HEK293 (cell line): ENCODE measurements at regions of chr6 and their contacts with region 1.

Region 1: GRCh38 chr6:21593412-21593926 is at the start of gene SOX4:
- H3K4me3 ChIP-seq: peak within 1 kb of the TSS; percentile 55
- H3K27ac ChIP-seq: peak within 1 kb of the TSS; percentile 99
- H3K4me1 ChIP-seq: peaks cover 12% of the 10 kb centered on the region
- CTCF ChIP-seq: no peak

Region 2: DNA sequence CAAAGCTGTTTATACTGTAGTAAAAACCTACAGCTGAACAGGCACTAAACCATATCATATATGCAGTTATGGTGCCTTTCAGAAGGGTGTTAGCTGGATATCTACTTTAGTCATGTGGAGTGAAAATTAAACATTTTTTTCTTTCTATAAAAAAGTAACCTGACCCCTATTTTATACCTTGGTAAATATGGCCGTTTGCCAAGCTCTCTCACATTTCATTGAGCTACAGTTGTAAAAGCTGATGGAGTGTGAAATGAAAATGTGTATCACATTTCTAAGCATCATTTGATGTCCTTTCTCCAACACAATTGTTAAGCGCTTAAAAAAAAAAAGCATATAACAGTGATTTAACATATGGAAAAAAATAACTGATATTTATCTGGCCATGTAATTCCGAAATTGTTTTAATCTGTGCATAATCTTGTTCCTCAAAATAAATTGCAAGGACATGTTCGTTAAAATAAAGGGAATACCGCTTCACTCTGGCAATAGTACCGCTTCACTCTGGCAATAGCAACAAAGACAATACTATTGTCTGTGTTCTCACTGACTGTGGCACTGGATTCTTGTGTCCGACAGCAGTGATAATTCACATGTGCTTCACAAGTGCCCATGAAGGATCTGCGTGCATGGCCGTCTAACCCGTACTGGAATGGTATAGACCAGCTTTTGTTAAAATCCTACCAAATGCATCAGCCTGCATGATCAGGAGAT is 391.7 kb before region 1 on chr6:
- CTCF ChIA-PET with region 1: no interaction called
- POLR2A ChIA-PET with region 1: interaction called, 12 read pairs
- H3K4me3 ChIP-seq: no peak overlapping the region
- H3K27ac ChIP-seq: peak overlapping the region; percentile 82
- H3K4me1 ChIP-seq: peaks cover 37% of the 10 kb centered on the region
- CTCF ChIP-seq: no peak

Region 3: DNA sequence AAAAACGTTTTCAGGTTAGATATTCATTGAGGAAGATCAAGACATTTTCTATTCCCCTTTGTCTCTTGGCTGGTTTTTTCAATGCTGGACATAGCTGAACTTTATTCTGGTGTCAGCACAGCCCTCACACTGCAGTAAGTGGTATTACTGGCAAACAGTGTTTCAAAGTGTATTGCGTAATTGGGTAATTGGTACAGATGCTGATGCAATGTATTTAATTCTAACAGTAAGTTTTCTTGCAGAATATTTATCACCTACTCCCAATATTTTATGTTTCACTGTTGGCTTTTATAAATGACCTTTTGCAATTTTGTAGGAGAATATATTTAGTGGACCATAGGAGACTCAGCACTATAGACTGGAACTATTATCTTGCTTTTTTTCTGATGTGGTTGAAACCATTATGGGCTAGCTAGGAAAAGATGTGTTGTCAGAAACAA is 287.6 kb before region 1 on chr6:
- CTCF ChIA-PET with region 1: no interaction called
- POLR2A ChIA-PET with region 1: no interaction called
- H3K4me3 ChIP-seq: no peak overlapping the region
- H3K27ac ChIP-seq: no peak overlapping the region
- H3K4me1 ChIP-seq: no peaks in the 10 kb centered on the region
- CTCF ChIP-seq: no peak

Region 4: GRCh38 chr6:21653905-21654304 is 60.4 kb after region 1 on chr6:
- CTCF ChIA-PET with region 1: interaction called, 3 read pairs
- POLR2A ChIA-PET with region 1: interaction called, 10 read pairs
- H3K4me3 ChIP-seq: no peak overlapping the region
- H3K27ac ChIP-seq: no peak overlapping the region
- H3K4me1 ChIP-seq: no peaks in the 10 kb centered on the region
- CTCF ChIP-seq: no peak

Region 5: GRCh38 chr6:21759721-21760120 is 166.3 kb after region 1 on chr6:
- CTCF ChIA-PET with region 1: no interaction called
- POLR2A ChIA-PET with region 1: interaction called, 18 read pairs
- H3K4me3 ChIP-seq: no peak overlapping the region
- H3K27ac ChIP-seq: no peak overlapping the region
- H3K4me1 ChIP-seq: peaks cover 4% of the 10 kb centered on the region; the same call in 1 of the 2 replicates
- CTCF ChIP-seq: no peak

Region 6: DNA sequence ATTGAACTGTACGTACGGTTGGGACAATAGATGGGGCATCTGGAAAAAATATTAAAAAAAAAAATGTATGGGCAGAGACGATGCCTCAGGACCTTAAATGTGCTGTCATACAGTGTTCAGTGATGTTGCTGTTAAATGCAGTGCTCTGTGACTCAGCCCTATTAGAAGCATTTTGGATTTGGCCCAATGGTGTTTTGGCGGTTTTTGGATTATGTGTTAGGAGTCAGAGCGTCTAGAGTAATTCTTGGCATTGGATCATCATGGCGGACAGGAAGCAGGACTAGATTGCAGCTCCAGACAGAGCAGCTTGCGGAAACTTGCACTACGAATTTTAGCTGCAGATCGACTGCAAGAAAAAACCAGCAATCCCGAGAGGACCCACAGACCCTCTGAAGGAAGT is 280.1 kb after region 1 on chr6:
- CTCF ChIA-PET with region 1: no interaction called
- POLR2A ChIA-PET with region 1: no interaction called
- H3K4me3 ChIP-seq: no peak overlapping the region
- H3K27ac ChIP-seq: no peak overlapping the region
- H3K4me1 ChIP-seq: no peaks in the 10 kb centered on the region
- CTCF ChIP-seq: no peak

Region 7: GRCh38 chr6:21914121-21914973 is 320.9 kb after region 1 on chr6:
- CTCF ChIA-PET with region 1: no interaction called
- POLR2A ChIA-PET with region 1: interaction called, 28 read pairs
- H3K4me3 ChIP-seq: no peak overlapping the region
- H3K27ac ChIP-seq: peak overlapping the region; percentile 58
- H3K4me1 ChIP-seq: peaks cover 7% of the 10 kb centered on the region; the same call in 1 of the 2 replicates
- CTCF ChIP-seq: no peak

Region 8: GRCh38 chr6:22008248-22008836 is 414.9 kb after region 1 on chr6:
- CTCF ChIA-PET with region 1: no interaction called
- POLR2A ChIA-PET with region 1: interaction called, 17 read pairs
- H3K4me3 ChIP-seq: no peak overlapping the region
- H3K27ac ChIP-seq: no peak overlapping the region
- H3K4me1 ChIP-seq: peaks cover 13% of the 10 kb centered on the region
- CTCF ChIP-seq: no peak